HepG2 (cell line): ENCODE measurements at regions of chr6 and their contacts with region 1.

Region 1: DNA sequence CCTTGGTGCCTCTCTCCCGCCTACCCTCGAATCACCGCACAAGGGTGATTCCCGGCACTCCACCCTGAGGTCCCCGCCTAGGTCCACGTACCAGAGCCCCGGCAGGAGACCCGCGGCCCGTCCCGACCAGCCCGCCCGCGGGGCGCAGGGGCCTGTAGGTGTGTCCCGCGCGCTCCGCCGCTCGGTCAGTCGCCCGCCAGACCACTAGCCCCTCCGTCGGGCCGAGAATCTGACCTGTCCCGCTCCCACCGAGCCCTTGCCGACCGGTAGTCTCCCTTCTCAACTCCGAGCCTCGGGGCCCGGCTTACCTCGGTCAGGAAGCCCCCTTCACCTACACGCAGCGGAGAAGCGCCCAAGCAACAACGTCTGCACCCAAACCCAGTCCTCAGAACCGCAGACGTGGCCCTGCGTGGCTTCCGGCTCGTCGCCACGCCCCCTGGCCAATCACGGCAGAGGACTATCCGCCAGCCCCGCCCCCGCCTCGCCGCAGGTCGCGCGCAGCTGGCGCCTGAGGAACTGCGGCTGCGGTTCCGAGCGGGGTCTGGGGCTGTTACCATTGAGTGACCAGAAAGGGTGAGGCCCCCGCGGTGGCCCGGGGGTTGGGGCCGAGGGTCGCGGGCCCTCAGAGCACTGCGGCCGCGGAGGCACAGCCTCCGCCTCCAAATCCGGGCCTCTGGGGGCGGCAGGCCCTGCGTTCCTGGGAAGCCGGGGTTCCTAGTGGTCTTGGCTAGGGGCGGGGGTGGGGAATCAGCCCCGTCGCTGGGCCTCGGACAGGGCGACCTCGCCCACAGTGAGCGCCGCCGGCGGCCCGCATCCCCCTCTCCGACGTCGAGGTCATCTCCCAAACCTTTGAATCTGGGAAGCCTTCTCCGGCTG is at the starts of genes PGM3 and RWDD2A:
- DNase-seq: peak; percentile 84
- ATAC-seq: peak; percentile 95
- H3K4me3 ChIP-seq: peak within 1 kb of the TSS; percentile 90 to 98 (median 97)
- H3K27ac ChIP-seq: peak within 1 kb of the TSS; percentile 95
- H3K4me1 ChIP-seq: peaks cover 45% of the 10 kb centered on the region
- H3K27me3 ChIP-seq: no peaks in the 10 kb centered on the region; a peak in 1 of 5 replicates
- CTCF ChIP-seq: no peak
- EP300 ChIP-seq: no peak
- POLR2A ChIP-seq: peak; percentile 94
- RAD21 ChIP-seq: peak; percentile 38; the same call in 1 of the 2 replicates
- total RNA-seq, gene PGM3: 163 and 231 TPM in 2 replicates
- total RNA-seq, gene RWDD2A: 5.3 and 6.9 TPM in 2 replicates

Region 2: DNA sequence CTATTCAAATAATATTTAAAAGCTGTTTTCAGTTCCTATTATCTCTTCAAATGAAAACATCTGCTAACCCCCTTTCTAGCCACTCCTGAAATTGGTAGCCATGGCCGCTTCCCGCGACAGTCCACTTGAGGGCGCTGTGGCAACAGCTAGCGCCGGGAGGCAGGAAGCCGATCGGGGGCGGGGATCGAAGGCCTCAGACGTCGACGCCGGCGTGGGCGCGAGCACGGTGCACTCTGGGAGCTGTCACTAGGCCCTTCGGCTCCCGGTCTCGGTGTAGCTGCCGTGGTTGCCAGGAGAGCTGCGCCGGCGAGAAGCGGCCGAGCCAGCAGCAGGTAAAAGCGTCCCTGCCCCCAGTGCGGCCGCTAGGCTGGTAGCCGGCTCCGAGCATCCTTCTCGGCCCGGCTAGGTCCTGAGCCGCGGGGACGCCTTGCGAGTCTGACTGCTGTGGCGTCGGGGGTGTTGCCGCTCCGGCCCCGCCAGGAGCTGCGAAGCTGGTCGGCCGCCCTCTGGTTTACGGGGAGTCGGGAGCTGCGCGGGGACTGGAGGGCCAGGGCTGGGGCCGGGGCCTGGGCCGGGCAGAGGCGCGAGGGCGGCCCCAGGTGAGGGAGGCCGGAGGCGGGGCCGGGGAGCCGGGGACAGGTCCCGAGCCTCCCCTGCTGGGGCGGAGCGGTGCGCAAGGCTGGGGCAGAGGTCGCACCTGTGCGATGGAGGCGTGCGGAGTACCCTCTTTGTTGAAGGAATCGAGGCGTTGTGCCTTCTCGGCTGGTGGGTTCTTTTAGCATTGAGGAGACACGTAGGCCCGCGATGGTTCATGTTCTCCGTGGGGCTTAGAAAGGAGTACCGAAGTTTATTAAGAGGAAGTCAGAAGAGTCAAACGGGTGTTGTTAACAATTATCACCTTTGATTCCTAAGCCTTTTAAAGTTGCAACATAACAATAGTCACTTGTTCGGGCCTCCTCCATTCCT is 125.4 kb before region 1 on chr6 and contains the start of gene DOP1A:
- CTCF ChIA-PET with region 1: no interaction called
- POLR2A ChIA-PET with region 1: interaction called, 7 read pairs
- in situ Hi-C with region 1: no loop called
- intact Hi-C with region 1: loop called (anchors 1 kb)
- DNase-seq: peak; percentile 86
- ATAC-seq: peak; percentile 91
- H3K4me3 ChIP-seq: peak within 1 kb of the TSS; percentile 79 to 87 (median 86)
- H3K27ac ChIP-seq: peak within 1 kb of the TSS; percentile 85
- H3K4me1 ChIP-seq: peaks cover 30% of the 10 kb centered on the region
- H3K27me3 ChIP-seq: no peaks in the 10 kb centered on the region; a peak in 1 of 5 replicates
- CTCF ChIP-seq: peak; percentile 97
- EP300 ChIP-seq: no peak
- POLR2A ChIP-seq: peak; percentile 67 to 76
- RAD21 ChIP-seq: peak; percentile 89
- total RNA-seq, gene DOP1A: 16.7 and 18.9 TPM in 2 replicates

Region 3: DNA sequence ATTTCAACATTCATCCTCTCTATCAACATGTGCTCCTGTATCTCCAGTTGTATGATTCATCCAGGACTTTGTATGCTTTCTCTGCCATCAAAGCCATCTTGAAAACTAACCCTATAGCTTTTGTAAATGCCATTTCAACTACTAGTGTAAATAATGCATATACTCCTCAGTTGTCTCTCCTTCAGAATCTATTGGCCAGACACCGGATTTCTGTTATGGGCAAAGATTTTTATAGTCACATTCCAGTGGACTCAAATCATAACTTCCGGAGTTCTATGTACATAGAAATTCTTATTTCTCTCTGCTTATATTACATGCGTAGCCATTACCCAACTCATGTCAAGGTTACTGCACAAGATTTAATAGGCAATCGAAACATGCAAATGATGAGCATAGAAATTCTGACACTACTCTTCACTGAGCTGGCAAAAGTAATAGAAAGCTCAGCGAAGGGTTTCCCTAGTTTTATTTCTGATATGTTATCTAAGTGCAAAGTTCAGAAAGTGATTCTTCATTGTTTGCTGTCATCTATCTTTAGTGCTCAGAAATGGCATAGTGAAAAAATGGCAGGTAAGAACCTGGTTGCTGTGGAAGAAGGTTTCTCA is 54.9 kb before region 1 on chr6:
- CTCF ChIA-PET with region 1: no interaction called
- POLR2A ChIA-PET with region 1: no interaction called
- in situ Hi-C with region 1: no loop called
- intact Hi-C with region 1: loop called (anchors 5 kb)
- DNase-seq: no peak
- ATAC-seq: no peak
- H3K4me3 ChIP-seq: no peak overlapping the region
- H3K27ac ChIP-seq: no peak overlapping the region
- H3K4me1 ChIP-seq: no peaks in the 10 kb centered on the region
- H3K27me3 ChIP-seq: no peaks in the 10 kb centered on the region
- CTCF ChIP-seq: no peak
- EP300 ChIP-seq: no peak
- POLR2A ChIP-seq: no peak
- RAD21 ChIP-seq: no peak